Activated naive CD4-positive, alpha-beta T cell treated with anti-CD3 and anti-CD28 coated beads for 36 hours (primary cell): ENCODE measurements at regions of chr6 and their contacts with region 1.

Region 1: DNA sequence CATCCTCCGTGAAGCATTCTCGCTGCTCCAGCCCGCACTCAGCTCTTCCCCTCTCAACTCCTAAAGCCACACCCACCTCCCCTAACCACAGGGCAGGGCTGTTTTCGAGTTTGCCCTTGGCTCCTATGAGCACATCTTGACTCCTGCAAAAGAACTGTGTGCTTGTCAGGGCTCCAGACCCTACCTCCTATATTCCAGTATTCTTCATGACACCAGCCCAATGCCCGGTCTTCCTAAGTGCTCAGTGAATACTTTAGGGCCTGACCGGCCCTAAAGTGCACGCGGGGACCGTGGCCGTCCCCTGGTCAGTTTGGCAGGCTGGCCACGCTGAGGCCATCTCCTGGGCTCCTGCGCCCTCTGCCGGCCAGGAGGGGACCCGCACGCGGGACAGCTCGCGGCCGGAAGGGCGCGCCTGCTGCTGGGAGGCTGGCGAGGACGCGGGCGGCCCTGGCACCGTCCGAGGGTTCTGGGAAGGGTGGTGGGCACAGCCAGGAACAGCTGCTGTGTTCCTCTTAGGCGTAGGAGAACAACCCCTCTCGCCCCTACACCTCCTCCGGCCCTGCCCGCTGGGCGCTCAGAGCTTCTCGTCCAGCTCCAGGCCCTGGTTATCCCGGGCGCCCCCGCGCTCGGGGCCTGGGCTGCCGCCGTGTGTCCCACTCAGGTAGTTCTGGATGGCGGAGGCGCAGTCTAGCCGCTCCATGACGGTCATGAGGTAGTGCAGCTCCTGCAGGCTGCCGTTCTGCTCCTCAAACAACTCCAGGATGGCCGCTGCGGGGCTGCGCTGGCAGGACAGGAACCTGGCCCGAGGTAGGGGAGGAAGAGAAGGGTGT is 11.0 kb downstream of the UNC5CL start:
- DNase-seq: peak; percentile 79
- H3K4me3 Mint-ChIP-seq: peak overlapping the region; percentile 80
- H3K27ac Mint-ChIP-seq: peak overlapping the region; percentile 62
- H3K4me1 Mint-ChIP-seq: peaks cover 17% of the 10 kb centered on the region
- H3K27me3 Mint-ChIP-seq: no peaks in the 10 kb centered on the region

Region 2: GRCh38 chr6:39980839-39981580 is 1047.0 kb before region 1 on chr6:
- CTCF ChIA-PET with region 1: no interaction called
- intact Hi-C with region 1: loop called (anchors 5 kb)
- DNase-seq: peak; percentile 25
- H3K4me3 Mint-ChIP-seq: no peak overlapping the region
- H3K27ac Mint-ChIP-seq: no peak overlapping the region
- H3K4me1 Mint-ChIP-seq: no peaks in the 10 kb centered on the region
- H3K27me3 Mint-ChIP-seq: peaks cover 37% of the 10 kb centered on the region

Region 3: GRCh38 chr6:40328405-40328987 is 699.5 kb before region 1 on chr6:
- CTCF ChIA-PET with region 1: interaction called, 3 read pairs
- intact Hi-C with region 1: loop called (anchors 2 kb)
- DNase-seq: peak; percentile 55
- H3K4me3 Mint-ChIP-seq: no peak overlapping the region
- H3K27ac Mint-ChIP-seq: no peak overlapping the region
- H3K4me1 Mint-ChIP-seq: peaks cover 2% of the 10 kb centered on the region
- H3K27me3 Mint-ChIP-seq: peaks cover 18% of the 10 kb centered on the region

Region 4: DNA sequence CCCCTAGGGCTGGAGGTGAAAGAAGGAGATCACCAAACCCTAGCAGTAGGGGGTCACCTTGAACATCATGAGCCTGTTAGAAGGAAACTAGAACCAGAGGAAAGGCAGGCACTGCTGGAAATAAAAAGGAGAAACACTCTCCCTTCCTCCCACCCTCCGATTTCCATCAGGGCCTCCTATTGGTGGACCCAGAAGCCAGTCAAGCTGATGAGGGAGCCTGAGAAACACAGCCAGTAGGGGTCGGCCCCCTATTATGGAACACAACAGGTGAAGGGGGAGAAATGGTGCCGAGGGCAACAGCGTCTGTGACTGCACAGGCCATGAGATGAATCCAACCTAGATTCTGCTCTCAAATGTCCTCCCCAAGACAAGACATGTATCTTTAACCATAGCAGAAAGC is 284.8 kb before region 1 on chr6:
- CTCF ChIA-PET with region 1: no interaction called
- intact Hi-C with region 1: no loop called
- DNase-seq: no peak
- H3K4me3 Mint-ChIP-seq: no peak overlapping the region
- H3K27ac Mint-ChIP-seq: no peak overlapping the region
- H3K4me1 Mint-ChIP-seq: no peaks in the 10 kb centered on the region
- H3K27me3 Mint-ChIP-seq: peaks cover 5% of the 10 kb centered on the region

Region 5: DNA sequence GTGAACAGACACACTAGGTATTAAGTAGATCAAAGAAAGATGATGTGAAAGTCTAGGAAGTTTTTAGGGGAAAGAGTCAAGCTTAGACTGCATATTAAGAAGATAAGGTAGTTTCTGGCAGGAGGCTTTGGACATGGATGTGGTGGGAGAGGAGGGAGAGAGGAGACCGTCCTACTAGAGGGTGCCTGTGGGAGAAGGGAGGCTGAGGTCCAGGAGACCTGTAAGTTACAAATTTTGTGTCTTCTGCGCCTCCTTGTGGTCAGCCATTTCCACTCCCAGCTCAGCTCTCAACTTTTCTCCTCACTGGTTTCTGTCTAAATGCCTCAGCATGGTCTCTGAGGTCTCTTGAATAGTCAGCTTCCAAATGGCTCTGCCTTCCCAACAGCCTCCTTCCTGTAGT is 182.5 kb before region 1 on chr6:
- CTCF ChIA-PET with region 1: no interaction called
- intact Hi-C with region 1: no loop called
- DNase-seq: peak; percentile 51
- H3K4me3 Mint-ChIP-seq: no peak overlapping the region
- H3K27ac Mint-ChIP-seq: no peak overlapping the region
- H3K4me1 Mint-ChIP-seq: no peaks in the 10 kb centered on the region
- H3K27me3 Mint-ChIP-seq: peaks cover 21% of the 10 kb centered on the region

Region 6: DNA sequence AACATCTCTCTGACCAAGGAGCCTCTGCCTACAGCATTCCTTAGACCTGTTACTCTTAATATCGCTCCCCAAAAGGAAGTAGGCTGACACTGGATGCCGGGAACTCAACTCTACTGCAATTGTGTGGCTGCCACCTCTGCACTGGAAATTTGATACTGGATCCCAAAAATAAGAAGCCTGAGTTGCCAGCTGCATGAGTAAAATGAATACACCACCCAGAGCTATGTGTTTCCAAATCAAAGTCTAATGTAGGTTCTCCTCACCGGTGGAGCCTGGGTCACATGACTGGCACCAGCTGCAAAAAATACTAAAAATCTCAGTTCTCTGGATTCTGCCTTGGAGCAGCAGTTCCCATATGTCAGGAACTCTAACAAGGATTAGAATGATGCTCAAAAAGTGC is 25.8 kb before region 1 on chr6:
- CTCF ChIA-PET with region 1: interaction called, 10 read pairs
- intact Hi-C with region 1: loop called (anchors 1 kb)
- DNase-seq: no peak
- H3K4me3 Mint-ChIP-seq: no peak overlapping the region
- H3K27ac Mint-ChIP-seq: no peak overlapping the region
- H3K4me1 Mint-ChIP-seq: no peaks in the 10 kb centered on the region
- H3K27me3 Mint-ChIP-seq: peaks cover 14% of the 10 kb centered on the region

Region 7: DNA sequence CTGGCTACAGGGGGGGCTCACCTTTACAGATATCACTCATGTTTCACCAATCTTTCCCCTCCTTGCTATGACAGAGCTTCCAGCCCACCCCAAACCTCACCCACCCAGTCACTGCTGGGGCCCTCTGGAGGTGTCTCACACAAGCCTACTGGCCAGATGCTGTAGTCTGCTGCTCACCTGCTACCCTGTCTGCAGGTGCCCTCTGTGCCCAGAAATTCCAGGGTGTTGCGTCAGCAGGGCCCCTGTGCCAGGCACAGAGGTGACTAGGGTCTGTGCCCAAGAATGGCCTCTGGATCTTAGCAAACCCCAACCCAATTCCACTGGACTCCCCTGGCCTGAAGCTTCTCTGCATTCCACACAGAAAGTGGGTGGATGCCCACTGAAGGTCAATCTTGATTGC is 10.4 kb before region 1 on chr6:
- CTCF ChIA-PET with region 1: interaction called, 11 read pairs
- intact Hi-C with region 1: no loop called
- DNase-seq: no peak
- H3K4me3 Mint-ChIP-seq: no peak overlapping the region
- H3K27ac Mint-ChIP-seq: no peak overlapping the region
- H3K4me1 Mint-ChIP-seq: no peaks in the 10 kb centered on the region
- H3K27me3 Mint-ChIP-seq: no peaks in the 10 kb centered on the region

Region 8: GRCh38 chr6:41039060-41039998 is 11.3 kb after region 1 on chr6 and contains the start of gene UNC5CL:
- CTCF ChIA-PET with region 1: interaction called, 37 read pairs
- intact Hi-C with region 1: no loop called
- DNase-seq: peak; percentile 76
- H3K4me3 Mint-ChIP-seq: no peak within 1 kb of the TSS
- H3K27ac Mint-ChIP-seq: no peak within 1 kb of the TSS
- H3K4me1 Mint-ChIP-seq: peaks cover 3% of the 10 kb centered on the region
- H3K27me3 Mint-ChIP-seq: no peaks in the 10 kb centered on the region
- total RNA-seq, gene UNC5CL: 2.3 to 3.0 TPM

Region 9: DNA sequence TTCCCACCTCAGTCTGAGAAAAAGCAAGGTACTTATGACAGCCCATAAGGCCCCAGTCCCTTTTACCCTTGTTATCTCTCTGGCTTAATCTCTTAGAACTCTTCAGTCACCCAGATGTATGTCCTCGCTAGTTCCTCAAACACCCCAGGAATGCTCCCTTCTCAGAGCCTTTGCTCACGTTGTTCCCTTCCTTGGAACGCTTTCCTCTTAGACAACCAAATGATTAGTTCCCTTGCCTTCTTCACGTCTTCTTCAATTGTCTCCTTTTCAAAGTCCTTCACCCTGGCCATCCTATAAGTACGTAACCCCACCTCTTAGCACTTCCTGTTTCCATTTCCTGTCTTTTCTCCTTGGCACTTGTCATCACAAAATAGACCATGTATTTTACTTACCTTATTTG is 23.9 kb after region 1 on chr6:
- CTCF ChIA-PET with region 1: interaction called, 12 read pairs
- intact Hi-C with region 1: no loop called
- DNase-seq: no peak
- H3K4me3 Mint-ChIP-seq: no peak overlapping the region
- H3K27ac Mint-ChIP-seq: no peak overlapping the region
- H3K4me1 Mint-ChIP-seq: peaks cover 16% of the 10 kb centered on the region
- H3K27me3 Mint-ChIP-seq: no peaks in the 10 kb centered on the region